ENCODE measurements at regions of chr6 and their contacts with region 1.

Region 1: DNA sequence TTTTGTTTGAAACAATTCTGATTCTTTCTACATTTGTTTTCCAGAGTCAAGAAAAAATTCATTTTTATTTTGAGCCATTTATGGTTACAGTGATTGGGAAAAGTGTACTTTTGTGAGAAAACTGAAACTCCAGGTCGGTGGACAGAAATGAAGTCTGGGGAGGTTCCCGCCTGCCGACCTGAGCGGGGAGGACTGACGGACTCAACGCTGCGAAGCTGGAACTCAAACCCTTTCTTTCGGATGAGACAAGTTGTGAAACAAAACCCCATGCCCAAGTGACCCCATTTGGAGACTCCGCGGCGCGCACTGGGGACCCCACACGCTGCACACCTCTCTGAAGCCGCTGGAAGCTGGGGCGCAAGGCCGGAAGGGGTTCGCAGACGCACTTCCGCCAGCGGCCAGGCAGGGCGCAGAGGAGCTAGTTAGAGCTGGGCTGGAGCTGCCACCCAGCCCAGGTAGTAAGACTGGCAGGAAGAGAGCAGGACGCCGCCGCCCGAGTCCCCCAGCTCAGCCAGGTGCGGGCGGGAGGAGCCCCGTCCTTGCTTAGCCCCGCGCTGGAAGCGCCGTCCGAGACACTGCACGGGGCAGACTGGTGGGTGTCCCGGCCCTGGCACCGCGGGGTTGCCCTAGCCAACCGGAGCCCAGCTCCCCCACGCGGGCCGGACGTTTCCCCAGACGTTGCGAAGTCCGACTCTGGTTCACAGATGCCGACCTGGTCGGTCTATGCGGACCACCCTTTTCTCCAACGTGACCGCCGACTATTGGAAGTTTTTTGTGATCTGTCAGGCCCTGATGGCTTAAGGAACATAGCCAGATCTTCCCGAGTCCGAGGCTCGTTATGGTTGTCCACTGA is 19.8 kb upstream of the ZSCAN16 start:
- DNase-seq: peak; percentile 79 to 83 (median 82)
- H3K4me3 ChIP-seq: peak overlapping the region; percentile 59 to 67
- H3K4me3 Mint-ChIP-seq: peak overlapping the region; percentile 85 to 96 (median 92)
- H3K27ac ChIP-seq: peak overlapping the region; percentile 72
- H3K27ac Mint-ChIP-seq: peak overlapping the region; percentile 80 to 97 (median 93)
- H3K4me1 ChIP-seq: peaks cover 13% of the 10 kb centered on the region
- H3K4me1 Mint-ChIP-seq: peaks cover 3 to 17% (median 11%) of the 10 kb centered on the region in 4 donors
- H3K27me3 ChIP-seq: no peaks in the 10 kb centered on the region
- H3K27me3 Mint-ChIP-seq: peaks cover 3 to 11% of the 10 kb centered on the region in 2 donors

Region 2: GRCh38 chr6:27321901-27322300 is 782.7 kb before region 1 on chr6:
- CTCF ChIA-PET with region 1: no interaction called
- POLR2A ChIA-PET with region 1: no interaction called
- intact Hi-C with region 1: no loop called
- DNase-seq: no peak
- H3K4me3 ChIP-seq: no peak overlapping the region
- H3K4me3 Mint-ChIP-seq: no peak overlapping the region
- H3K27ac ChIP-seq: no peak overlapping the region
- H3K27ac Mint-ChIP-seq: no peak overlapping the region
- H3K4me1 ChIP-seq: no peaks in the 10 kb centered on the region
- H3K4me1 Mint-ChIP-seq: no peaks in the 10 kb centered on the region
- H3K27me3 ChIP-seq: peaks cover 10% of the 10 kb centered on the region
- H3K27me3 Mint-ChIP-seq: peaks cover 18 to 23% of the 10 kb centered on the region in 2 donors

Region 3: DNA sequence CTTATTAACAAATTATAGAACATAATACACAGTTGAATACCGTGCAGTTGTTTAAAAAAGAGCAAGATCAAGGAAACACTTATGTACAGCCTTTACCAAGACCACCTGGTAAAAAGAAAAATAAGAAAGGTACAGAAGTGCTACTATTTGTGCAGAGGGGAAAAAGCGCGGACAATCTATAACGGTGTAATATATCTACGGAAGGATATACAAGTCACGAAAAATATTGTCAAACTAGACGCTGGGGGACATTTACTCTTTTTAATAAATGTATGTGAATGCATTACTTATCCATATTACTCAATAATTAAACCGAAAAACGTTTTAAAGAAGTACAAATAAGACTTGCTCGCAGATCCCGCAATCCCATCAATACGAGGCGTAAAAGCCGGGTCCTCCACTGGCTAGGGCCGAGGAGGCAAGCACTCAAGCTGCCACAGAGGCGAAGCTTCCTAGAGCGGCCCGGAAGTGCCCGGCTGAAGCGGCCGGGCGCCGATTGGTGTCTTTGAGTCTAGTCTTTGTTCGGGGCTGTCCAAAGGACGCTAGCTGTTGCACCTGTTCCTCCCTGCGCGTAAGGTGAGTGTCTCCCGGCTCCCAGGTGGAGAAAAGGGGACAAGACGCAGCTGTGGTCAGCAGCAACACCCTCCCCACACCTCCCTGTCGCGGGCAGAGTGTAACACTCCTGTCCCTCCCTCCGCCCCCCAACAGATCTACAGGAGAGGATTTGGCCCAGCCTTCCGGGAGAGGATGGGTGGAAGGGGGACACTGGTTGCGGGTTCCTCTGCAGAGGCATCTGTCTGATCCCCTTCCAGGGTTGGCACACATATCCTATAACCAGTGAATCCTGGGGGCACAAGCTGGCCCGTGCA is 19.7 kb after region 1 on chr6 and contains the start of gene ZSCAN16:
- CTCF ChIA-PET with region 1: interaction called, 5 read pairs
- POLR2A ChIA-PET with region 1: interaction called, 30 read pairs
- intact Hi-C with region 1: loop called (anchors 1 kb)
- DNase-seq: peak; percentile 63 to 79 (median 68)
- H3K4me3 ChIP-seq: peak within 1 kb of the TSS; percentile 70 to 74
- H3K4me3 Mint-ChIP-seq: peak within 1 kb of the TSS; percentile 93 to 98 (median 95)
- H3K27ac ChIP-seq: peak within 1 kb of the TSS; percentile 84
- H3K27ac Mint-ChIP-seq: peak within 1 kb of the TSS; percentile 96 to 99 (median 98)
- H3K4me1 ChIP-seq: peaks cover 24% of the 10 kb centered on the region
- H3K4me1 Mint-ChIP-seq: peaks cover 36 to 52% (median 48%) of the 10 kb centered on the region in 4 donors
- H3K27me3 ChIP-seq: no peaks in the 10 kb centered on the region
- H3K27me3 Mint-ChIP-seq: no peaks in the 10 kb centered on the region
- total RNA-seq, gene ZSCAN16: 13.4 to 14.8 TPM

Region 4: DNA sequence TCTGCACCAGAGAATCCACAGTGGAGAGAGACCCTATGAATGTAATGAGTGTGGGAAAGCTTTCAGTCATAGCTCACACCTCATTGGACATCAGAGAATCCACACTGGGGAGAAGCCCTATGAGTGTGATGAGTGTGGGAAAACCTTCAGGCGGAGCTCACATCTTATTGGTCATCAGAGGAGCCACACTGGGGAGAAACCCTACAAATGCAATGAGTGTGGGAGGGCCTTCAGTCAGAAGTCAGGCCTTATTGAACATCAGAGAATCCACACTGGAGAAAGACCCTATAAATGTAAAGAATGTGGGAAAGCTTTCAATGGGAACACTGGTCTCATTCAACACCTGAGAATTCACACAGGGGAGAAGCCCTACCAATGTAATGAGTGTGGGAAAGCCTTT is 48.9 kb after region 1 on chr6:
- CTCF ChIA-PET with region 1: no interaction called
- POLR2A ChIA-PET with region 1: no interaction called
- intact Hi-C with region 1: no loop called
- DNase-seq: no peak
- H3K4me3 ChIP-seq: no peak overlapping the region
- H3K4me3 Mint-ChIP-seq: no peak overlapping the region
- H3K27ac ChIP-seq: no peak overlapping the region
- H3K27ac Mint-ChIP-seq: no peak overlapping the region
- H3K4me1 ChIP-seq: no peaks in the 10 kb centered on the region
- H3K4me1 Mint-ChIP-seq: peaks cover 0 to 6% (median 2%) of the 10 kb centered on the region in 4 donors
- H3K27me3 ChIP-seq: no peaks in the 10 kb centered on the region
- H3K27me3 Mint-ChIP-seq: no peaks in the 10 kb centered on the region

Region 5: GRCh38 chr6:28252009-28252975 is 147.7 kb after region 1 on chr6 and contains the start of gene ZKSCAN4:
- CTCF ChIA-PET with region 1: interaction called, 5 read pairs
- POLR2A ChIA-PET with region 1: interaction called, 13 read pairs
- intact Hi-C with region 1: loop called (anchors 1 kb)
- DNase-seq: peak; percentile 79 to 82 (median 80)
- H3K4me3 ChIP-seq: peak within 1 kb of the TSS; percentile 98 to 99
- H3K4me3 Mint-ChIP-seq: peak within 1 kb of the TSS; percentile 94 to 99 (median 97)
- H3K27ac ChIP-seq: peak within 1 kb of the TSS; percentile 52
- H3K27ac Mint-ChIP-seq: peak within 1 kb of the TSS; percentile 75 to 95 (median 89)
- H3K4me1 ChIP-seq: peaks cover 22% of the 10 kb centered on the region
- H3K4me1 Mint-ChIP-seq: peaks cover 22 to 38% (median 31%) of the 10 kb centered on the region in 4 donors
- H3K27me3 ChIP-seq: no peaks in the 10 kb centered on the region
- H3K27me3 Mint-ChIP-seq: no peaks in the 10 kb centered on the region
- total RNA-seq, gene ZKSCAN4: 9.9 to 11.1 TPM

Measured in CD4-positive, alpha-beta memory T cell (primary cell).